T-cell (primary cell): ENCODE measurements at regions of chr6 and their contacts with region 1.

Region 1: DNA sequence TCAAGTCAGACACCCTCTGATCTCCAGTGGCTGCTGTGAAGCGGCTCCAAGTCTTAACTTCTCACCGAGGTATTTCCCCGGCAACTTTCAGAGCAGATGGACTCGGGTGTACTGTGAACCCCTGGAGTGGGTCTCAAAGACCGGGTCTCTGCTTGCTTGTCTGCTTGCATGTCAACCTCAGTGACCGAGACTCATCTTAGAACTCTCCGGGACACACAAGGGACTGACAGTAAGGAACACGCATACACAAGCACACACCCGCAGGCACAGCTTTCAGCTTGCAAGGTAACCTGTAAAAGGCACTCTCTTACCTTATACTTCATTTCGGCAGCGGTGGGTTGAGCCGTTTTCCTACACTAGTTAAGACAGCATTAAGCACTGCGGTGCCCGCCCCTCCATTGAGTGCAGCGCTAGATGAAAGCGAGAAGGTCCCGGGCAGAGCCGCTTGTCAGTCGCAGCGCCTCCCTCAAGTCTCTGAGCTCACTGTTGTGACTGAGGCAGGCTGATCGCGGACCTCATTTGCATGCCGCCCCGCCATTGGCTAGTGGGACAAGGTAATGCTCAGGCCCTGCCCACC is at the start of gene NEDD9:
- DNase-seq: peak; percentile 77 to 99 (median 95)
- ATAC-seq: peak; percentile 94 to 100 (median 98)
- H3K4me3 ChIP-seq: peak within 1 kb of the TSS; percentile 48 to 64
- H3K4me3 Mint-ChIP-seq: peak within 1 kb of the TSS; percentile 83 to 89 (median 87)
- H3K27ac ChIP-seq: peak within 1 kb of the TSS; percentile 84
- H3K27ac Mint-ChIP-seq: peak within 1 kb of the TSS; percentile 93 to 95
- H3K4me1 ChIP-seq: peaks cover 33 to 37% of the 10 kb centered on the region in 2 experiments
- H3K4me1 Mint-ChIP-seq: peaks cover 50 to 81% (median 65%) of the 10 kb centered on the region in 3 donors
- H3K27me3 ChIP-seq: no peaks in the 10 kb centered on the region
- H3K27me3 Mint-ChIP-seq: no peaks in the 10 kb centered on the region
- total RNA-seq, gene NEDD9: 30.8 to 55.3 (median 33.7) TPM

Region 2: GRCh38 chr6:11009353-11009752 is 222.9 kb before region 1 on chr6:
- CTCF ChIA-PET with region 1: no interaction called
- POLR2A ChIA-PET with region 1: no interaction called
- DNase-seq: no peak
- ATAC-seq: no peak
- H3K4me3 ChIP-seq: no peak overlapping the region
- H3K4me3 Mint-ChIP-seq: no peak overlapping the region
- H3K27ac ChIP-seq: no peak overlapping the region
- H3K27ac Mint-ChIP-seq: no peak overlapping the region
- H3K4me1 ChIP-seq: no peaks in the 10 kb centered on the region
- H3K4me1 Mint-ChIP-seq: no peaks in the 10 kb centered on the region
- H3K27me3 ChIP-seq: peaks cover 0 to 3% of the 10 kb centered on the region in 2 experiments
- H3K27me3 Mint-ChIP-seq: peaks cover 18 to 19% of the 10 kb centered on the region in 2 donors

Region 3: GRCh38 chr6:11202513-11203305 is 29.6 kb before region 1 on chr6:
- CTCF ChIA-PET with region 1: interaction called in 1 of 2 experiments, 5 read pairs
- POLR2A ChIA-PET with region 1: interaction called, 3 to 17 read pairs
- DNase-seq: peak in 25 of 35 experiments; percentile 1 to 63 (median 24)
- ATAC-seq: peak in 3 of 4 experiments; percentile 34 to 43 (median 42)
- H3K4me3 ChIP-seq: no peak overlapping the region
- H3K4me3 Mint-ChIP-seq: peak overlapping the region in 1 of 3 donors; percentile 28
- H3K27ac ChIP-seq: peak overlapping the region; percentile 44
- H3K27ac Mint-ChIP-seq: peak overlapping the region in 1 of 2 donors; percentile 70
- H3K4me1 ChIP-seq: peaks cover 26 to 33% of the 10 kb centered on the region in 2 experiments
- H3K4me1 Mint-ChIP-seq: peaks cover 53 to 71% (median 54%) of the 10 kb centered on the region in 3 donors
- H3K27me3 ChIP-seq: no peaks in the 10 kb centered on the region
- H3K27me3 Mint-ChIP-seq: no peaks in the 10 kb centered on the region

Region 4: GRCh38 chr6:11258260-11259237 is 26.3 kb after region 1 on chr6:
- CTCF ChIA-PET with region 1: interaction called in 1 of 2 experiments, 7 read pairs
- POLR2A ChIA-PET with region 1: interaction called in 1 of 2 experiments, 13 read pairs
- DNase-seq: peak in 30 of 35 experiments; percentile 2 to 64 (median 30)
- ATAC-seq: peak; percentile 75 to 89 (median 84)
- H3K4me3 ChIP-seq: no peak overlapping the region
- H3K4me3 Mint-ChIP-seq: peak overlapping the region in 1 of 3 donors; percentile 43
- H3K27ac ChIP-seq: peak overlapping the region; percentile 81
- H3K27ac Mint-ChIP-seq: peak overlapping the region; percentile 90 to 91
- H3K4me1 ChIP-seq: peaks cover 18 to 43% of the 10 kb centered on the region in 2 experiments
- H3K4me1 Mint-ChIP-seq: peaks cover 61 to 79% (median 62%) of the 10 kb centered on the region in 3 donors
- H3K27me3 ChIP-seq: no peaks in the 10 kb centered on the region
- H3K27me3 Mint-ChIP-seq: no peaks in the 10 kb centered on the region

Region 5: GRCh38 chr6:11317885-11318771 is 85.8 kb after region 1 on chr6:
- CTCF ChIA-PET with region 1: interaction called in 1 of 2 experiments, 4 read pairs
- POLR2A ChIA-PET with region 1: interaction called in 1 of 2 experiments, 14 read pairs
- DNase-seq: peak in 34 of 35 experiments; percentile 26 to 79 (median 55)
- ATAC-seq: peak; percentile 82 to 96 (median 90)
- H3K4me3 ChIP-seq: no peak overlapping the region
- H3K4me3 Mint-ChIP-seq: peak overlapping the region in 1 of 3 donors; percentile 37
- H3K27ac ChIP-seq: peak overlapping the region; percentile 72
- H3K27ac Mint-ChIP-seq: peak overlapping the region; percentile 70 to 89
- H3K4me1 ChIP-seq: peaks cover 2 to 12% of the 10 kb centered on the region in 2 experiments
- H3K4me1 Mint-ChIP-seq: peaks cover 42 to 54% (median 50%) of the 10 kb centered on the region in 3 donors
- H3K27me3 ChIP-seq: no peaks in the 10 kb centered on the region
- H3K27me3 Mint-ChIP-seq: no peaks in the 10 kb centered on the region

Region 6: DNA sequence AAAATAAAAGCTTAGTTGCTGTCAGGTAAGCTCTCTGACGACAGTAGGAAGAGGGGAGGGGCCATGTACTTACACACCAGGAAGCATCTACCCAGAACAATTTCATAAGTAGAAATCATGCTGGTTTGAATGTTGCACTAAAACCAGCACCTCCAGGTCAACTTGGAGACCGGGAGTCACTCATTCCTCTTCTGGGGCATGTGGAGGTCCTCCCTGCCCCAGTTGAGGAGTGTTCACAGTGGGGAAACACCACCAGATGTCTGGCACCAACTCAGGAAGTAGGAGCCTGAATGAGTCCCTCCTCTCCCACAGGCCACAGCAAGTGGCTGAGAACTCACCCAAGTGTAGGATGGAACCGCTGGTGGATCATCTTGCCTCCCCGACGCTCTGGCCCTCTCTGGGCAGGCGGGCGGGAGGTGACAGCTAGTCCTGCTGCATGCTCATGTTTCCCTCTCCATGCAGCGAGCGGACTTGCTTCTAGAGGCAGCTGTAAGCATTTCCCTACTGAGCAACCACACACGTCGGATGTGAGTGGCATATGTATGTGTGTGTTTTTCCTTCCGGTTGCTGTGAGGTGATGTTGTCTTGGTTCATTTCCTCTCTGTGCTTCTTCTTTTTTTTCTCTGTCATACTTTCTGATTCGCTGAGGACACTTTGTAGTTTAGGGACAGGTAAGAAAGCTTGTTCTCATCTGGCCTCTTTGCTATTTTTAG is 149.7 kb after region 1 on chr6:
- CTCF ChIA-PET with region 1: interaction called in 1 of 2 experiments, 4 read pairs
- POLR2A ChIA-PET with region 1: interaction called in 1 of 2 experiments, 19 read pairs
- DNase-seq: peak; percentile 47 to 87 (median 68)
- ATAC-seq: peak; percentile 95 to 97 (median 96)
- H3K4me3 ChIP-seq: peak overlapping the region; percentile 80
- H3K4me3 Mint-ChIP-seq: peak overlapping the region; percentile 89 to 94 (median 90)
- H3K27ac ChIP-seq: peak overlapping the region; percentile 94
- H3K27ac Mint-ChIP-seq: peak overlapping the region; percentile 92 to 93
- H3K4me1 ChIP-seq: peaks cover 20 to 46% of the 10 kb centered on the region in 2 experiments
- H3K4me1 Mint-ChIP-seq: peaks cover 61 to 79% (median 62%) of the 10 kb centered on the region in 3 donors
- H3K27me3 ChIP-seq: no peaks in the 10 kb centered on the region
- H3K27me3 Mint-ChIP-seq: no peaks in the 10 kb centered on the region

Region 7: DNA sequence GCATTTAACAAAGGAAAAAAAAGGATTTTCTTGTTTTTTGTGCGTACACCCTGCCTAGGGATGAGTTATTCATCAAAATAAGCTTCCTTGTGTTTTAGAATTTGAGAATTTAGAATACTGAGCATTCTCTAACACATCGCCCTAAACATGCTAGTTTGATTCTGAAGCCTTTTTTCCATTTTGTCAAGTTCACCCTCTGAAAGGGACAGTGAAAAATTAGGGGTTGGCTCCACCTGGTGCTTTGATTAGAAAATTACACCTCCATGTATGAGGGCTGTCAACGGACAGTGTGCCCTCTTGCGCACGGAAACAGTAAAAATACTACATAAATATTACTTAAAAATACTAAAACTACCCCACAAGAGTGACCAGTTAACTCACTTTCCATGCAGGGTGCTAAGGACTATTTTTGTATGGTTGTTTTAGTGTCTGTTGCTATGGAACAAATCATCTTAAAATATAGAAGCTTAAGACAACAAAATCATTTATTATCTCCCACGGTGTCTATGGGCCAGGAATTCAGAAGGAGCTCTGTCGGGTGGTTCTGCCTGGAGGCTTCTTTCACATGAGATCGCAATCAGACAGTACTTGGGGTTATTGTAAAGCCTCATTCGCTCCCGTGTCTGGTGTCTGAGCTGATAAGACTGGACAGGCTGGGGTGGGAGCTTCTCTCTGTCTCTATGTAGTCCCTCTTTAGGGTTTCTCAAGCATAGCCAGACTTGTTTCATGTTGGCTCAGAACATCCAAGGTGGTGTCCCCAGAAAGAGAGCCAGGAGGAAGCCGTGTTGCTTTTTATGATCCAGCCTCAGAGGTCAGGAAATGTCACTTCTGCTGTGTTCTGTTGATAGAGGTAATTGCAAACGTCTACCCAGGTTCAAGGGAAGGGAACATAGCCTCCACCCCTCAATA is 264.1 kb after region 1 on chr6:
- CTCF ChIA-PET with region 1: interaction called in 1 of 2 experiments, 12 read pairs
- POLR2A ChIA-PET with region 1: interaction called in 1 of 2 experiments, 3 read pairs
- DNase-seq: peak; percentile 24 to 90 (median 62)
- ATAC-seq: peak; percentile 93 to 98 (median 94)
- H3K4me3 ChIP-seq: no peak overlapping the region
- H3K4me3 Mint-ChIP-seq: no peak overlapping the region
- H3K27ac ChIP-seq: no peak overlapping the region
- H3K27ac Mint-ChIP-seq: no peak overlapping the region
- H3K4me1 ChIP-seq: no peaks in the 10 kb centered on the region
- H3K4me1 Mint-ChIP-seq: peaks cover 0 to 4% (median 3%) of the 10 kb centered on the region in 3 donors
- H3K27me3 ChIP-seq: no peaks in the 10 kb centered on the region
- H3K27me3 Mint-ChIP-seq: no peaks in the 10 kb centered on the region